ENCODE measurements at regions of chr19 and their contacts with region 1.

Region 1: DNA sequence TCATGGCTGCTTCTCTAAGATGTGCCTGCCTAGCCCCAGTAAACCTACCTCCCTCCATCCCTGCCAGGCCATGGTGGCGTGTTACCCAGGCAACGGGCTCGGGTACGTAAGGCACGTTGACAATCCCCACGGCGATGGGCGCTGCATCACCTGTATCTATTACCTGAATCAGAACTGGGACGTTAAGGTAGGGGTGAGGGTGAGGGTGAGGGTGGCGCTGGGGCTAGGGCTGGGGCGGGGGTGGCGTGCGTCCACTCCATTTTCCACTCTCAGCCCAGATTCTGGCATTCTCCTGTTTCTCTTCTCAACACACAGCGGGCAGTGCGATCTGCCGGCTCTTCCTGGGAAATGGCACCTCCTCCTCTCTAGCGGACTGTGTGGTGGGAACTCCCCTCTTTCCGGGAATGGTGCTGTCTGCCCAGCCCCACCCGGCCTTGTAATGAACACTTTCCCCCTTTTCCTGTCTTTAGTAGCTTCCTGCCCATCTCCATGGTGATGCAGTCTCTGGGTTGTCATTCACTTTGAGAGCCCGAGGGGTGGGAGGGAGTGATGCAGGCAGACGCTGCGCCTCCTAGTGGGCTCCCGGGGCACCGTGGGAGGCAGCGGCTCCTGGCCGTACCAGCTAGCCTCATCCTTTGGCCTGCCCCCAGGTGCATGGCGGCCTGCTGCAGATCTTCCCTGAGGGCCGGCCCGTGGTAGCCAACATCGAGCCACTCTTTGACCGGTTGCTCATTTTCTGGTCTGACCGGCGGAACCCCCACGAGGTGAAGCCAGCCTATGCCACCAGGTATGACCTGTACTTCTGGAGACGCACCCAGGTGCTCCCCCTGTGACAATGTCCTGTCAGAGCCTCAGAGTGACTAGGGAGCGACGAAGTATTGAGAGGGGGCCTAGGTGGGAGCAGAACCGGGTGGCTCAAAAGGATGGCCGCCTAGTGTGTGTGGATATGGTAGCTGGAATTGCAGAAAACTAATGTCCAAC is 7.8 kb downstream of the EGLN2 start:
- DNase-seq: peak; percentile 94

Region 2: DNA sequence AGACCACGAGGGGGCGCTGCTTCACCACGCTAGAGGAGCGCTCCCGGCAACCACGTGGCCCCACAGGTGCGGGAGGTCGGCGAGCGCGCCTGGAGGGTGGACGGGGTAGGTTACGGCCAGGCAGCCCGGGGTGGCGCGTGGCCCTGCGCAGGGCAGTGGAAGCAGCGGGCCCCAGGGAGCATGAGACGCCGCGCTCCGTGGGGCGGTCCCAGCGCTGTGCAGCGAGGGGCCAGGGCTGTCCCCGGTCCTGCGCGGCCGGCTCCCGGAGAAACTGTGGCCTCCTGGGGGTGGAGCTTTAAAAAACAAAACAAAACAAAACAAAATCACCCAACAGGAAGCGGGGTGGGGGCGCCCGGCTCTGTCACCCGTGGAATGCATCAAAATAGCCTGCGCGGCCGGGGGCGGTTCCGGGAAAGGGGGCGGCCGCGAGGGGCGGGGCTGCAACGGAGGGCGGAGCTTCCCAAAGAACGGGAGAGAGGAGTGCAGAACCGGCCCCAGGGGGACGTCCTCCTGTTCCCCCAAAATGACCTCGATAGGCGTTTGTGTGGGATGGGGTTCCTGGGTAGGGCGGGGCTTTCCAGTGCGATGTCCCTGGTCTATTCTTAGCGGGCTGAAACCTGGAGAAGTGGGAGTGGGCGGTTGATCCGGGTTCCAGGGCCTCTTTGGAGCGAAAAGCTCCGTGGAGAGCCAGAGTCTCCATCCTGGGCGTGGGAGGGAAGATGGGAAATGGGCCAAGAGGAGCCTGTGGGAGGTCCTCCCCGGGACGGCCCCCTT is 143.7 kb before region 1 on chr19:
- intact Hi-C with region 1: loop called (anchors 5 to 10 kb)
- DNase-seq: peak; percentile 97

Region 3: DNA sequence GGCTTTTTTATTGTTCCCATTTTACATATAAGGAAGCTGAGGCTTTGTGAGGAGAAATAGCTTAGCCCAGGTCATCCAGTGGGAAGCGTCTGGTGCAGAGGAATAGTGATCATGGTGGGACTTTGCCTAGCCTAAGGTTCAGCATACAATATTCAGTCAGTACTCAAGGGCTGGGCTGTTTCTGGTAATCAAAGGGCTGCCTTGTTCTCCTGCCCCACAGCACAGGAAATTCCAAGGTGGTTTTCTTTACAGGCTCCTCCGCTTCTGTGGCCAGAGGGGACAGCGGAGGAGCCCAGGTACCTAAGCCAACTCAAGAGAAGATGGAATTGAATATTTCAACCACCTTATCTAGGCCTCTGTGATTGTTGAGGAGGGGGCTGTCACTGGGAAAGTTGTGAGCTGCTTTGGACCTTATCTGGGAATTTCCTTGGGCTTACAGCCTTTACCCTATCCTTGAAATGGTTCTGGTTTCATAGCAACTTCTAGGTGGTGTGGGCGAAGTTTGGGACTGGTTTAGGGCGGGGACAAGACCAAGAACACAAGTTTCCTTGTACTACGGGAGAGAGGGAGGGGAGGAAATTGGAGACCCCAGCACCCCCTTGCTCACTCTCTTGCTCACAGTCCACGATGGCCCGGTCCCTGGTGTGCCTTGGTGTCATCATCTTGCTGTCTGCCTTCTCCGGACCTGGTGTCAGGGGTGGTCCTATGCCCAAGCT is 31.7 kb before region 1 on chr19 and contains the start of gene MIA:
- intact Hi-C with region 1: no loop called
- DNase-seq: no peak
- total RNA-seq, gene MIA: 1.6 TPM in 1 of 2 donors, not detected in the other

Measured in posterior vena cava (tissue), 2 donors.